Activated naive CD4-positive, alpha-beta T cell treated with anti-CD3 and anti-CD28 coated beads for 36 hours (primary cell): ENCODE measurements at regions of chr7 and their contacts with region 1.

Region 1: GRCh38 chr7:5237286-5237685 is 45.5 kb upstream of the SLC29A4 start:
- DNase-seq: no peak
- H3K4me3 Mint-ChIP-seq: no peak overlapping the region
- H3K27ac Mint-ChIP-seq: no peak overlapping the region
- H3K4me1 Mint-ChIP-seq: peaks cover 18% of the 10 kb centered on the region
- H3K27me3 Mint-ChIP-seq: peaks cover 15% of the 10 kb centered on the region

Region 2: DNA sequence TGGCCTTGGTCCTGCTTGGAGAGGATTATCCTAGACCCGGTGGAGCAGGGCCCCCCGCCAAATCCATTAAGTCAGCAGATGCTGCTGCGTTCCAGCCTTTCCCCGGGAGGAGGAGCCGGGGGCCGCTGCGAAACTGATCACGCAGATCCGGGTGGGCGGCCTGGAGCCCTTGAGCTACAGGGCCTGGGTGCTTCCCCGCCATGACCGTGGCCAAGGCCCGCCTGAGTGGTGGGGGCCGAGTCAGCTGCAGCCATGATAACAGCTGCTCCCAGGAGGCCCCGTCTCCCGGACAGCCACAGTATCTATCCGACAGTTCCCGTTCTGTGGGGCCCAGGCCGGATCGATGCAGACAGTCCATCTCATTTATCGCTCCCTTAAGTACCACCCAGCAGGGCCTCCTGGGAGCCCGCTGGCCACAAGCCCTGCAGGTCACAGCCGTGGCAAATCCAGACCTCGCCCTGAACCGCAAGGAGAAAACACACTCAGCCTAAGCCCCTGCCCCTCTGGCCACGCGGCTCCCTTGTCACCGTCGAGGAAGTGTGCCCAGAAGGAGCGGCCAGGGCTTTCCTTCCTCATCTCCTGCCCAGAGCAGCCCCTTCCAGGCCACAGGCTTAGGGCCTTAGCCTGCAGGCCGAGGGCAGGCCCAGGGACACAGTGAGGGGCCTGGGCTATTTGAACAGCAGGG is 11.1 kb after region 1 on chr7:
- CTCF ChIA-PET with region 1: interaction called, 10 read pairs
- intact Hi-C with region 1: no loop called
- DNase-seq: no peak
- H3K4me3 Mint-ChIP-seq: no peak overlapping the region
- H3K27ac Mint-ChIP-seq: no peak overlapping the region
- H3K4me1 Mint-ChIP-seq: no peaks in the 10 kb centered on the region
- H3K27me3 Mint-ChIP-seq: no peaks in the 10 kb centered on the region

Region 3: GRCh38 chr7:5289355-5289754 is 52.1 kb after region 1 on chr7:
- CTCF ChIA-PET with region 1: interaction called, 10 read pairs
- intact Hi-C with region 1: no loop called
- DNase-seq: no peak
- H3K4me3 Mint-ChIP-seq: no peak overlapping the region
- H3K27ac Mint-ChIP-seq: no peak overlapping the region
- H3K4me1 Mint-ChIP-seq: no peaks in the 10 kb centered on the region
- H3K27me3 Mint-ChIP-seq: peaks cover 4% of the 10 kb centered on the region

Region 4: DNA sequence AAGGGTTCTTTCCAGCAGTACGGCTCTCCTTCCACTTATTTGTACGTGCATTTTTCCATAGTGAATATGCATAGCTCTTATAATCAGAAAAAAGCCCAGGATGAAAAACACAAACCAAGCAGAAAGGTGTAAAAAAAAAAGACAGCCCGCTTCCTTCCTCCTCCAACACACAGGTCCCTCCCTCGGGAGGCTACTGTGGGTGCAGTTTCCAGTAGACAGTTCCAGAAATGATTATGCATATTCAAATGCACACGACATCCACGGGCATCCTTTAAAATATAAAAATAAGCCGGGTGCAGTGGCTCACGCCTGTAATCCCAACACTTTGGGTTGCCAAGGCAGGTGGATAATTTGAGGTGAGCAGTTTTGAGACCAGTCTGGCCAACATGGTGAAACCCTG is 126.4 kb after region 1 on chr7:
- CTCF ChIA-PET with region 1: interaction called, 5 read pairs
- intact Hi-C with region 1: loop called (anchors 1 kb)
- DNase-seq: peak; percentile 33
- H3K4me3 Mint-ChIP-seq: no peak overlapping the region
- H3K27ac Mint-ChIP-seq: no peak overlapping the region
- H3K4me1 Mint-ChIP-seq: peaks cover 16% of the 10 kb centered on the region
- H3K27me3 Mint-ChIP-seq: no peaks in the 10 kb centered on the region

Region 5: DNA sequence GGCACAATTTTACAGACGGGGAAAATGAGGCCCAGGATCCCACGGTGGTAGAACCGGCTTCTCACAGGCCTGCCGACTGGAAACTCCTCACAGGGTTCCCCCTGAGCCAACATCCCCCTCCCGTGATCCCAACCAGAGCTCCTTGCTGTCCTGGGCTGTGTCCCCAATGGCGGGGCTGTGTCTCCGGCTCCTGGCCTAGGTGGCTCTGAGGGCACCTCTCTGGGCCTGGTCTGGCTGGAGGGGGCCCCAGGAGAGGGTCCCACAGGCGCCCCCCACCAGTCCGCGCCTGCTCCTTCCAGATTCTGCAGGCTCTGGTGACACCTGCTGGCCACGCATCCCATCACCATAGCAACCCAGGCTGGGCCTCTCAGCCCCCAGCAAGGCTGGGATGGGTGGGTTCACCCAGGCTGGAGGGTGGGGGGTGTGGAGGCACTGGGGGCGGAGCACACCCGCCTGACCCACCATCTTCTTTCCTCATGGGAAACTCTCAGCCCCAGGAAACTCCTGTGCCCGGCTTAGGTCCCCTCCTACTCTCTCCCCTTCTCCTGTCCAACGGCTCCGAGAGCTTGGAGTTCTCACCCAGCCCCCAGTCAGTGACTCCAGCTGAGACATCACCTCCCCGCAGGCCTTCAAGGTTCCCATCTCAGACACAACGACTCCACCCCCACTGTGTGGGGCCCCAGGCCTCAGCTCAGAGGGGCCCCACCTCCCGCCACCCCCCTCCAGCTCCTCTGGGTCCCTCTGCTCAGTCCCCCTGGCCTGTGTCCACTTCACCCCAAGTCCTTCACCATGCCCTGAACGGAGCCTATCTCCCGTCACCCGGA is 213.5 kb after region 1 on chr7:
- CTCF ChIA-PET with region 1: interaction called, 22 read pairs
- intact Hi-C with region 1: loop called (anchors 1 kb)
- DNase-seq: peak; percentile 55
- H3K4me3 Mint-ChIP-seq: no peak overlapping the region
- H3K27ac Mint-ChIP-seq: no peak overlapping the region
- H3K4me1 Mint-ChIP-seq: no peaks in the 10 kb centered on the region
- H3K27me3 Mint-ChIP-seq: no peaks in the 10 kb centered on the region